Activated T-helper 1 cell treated with anti-CD3 and anti-CD28 coated beads, Interleukin-12 subunit alpha, Interleukin-12 subunit beta, Interleukin-2, Interleukin-4 antibody, amounts not matched to agents 30 ng/mL and 10 ng/mL and 1 ng/mL, durations not matched to agents 14 hours and 24 hours and 36 hours (primary cell): ENCODE measurements at regions of chr16 and their contacts with region 1.

Region 1: DNA sequence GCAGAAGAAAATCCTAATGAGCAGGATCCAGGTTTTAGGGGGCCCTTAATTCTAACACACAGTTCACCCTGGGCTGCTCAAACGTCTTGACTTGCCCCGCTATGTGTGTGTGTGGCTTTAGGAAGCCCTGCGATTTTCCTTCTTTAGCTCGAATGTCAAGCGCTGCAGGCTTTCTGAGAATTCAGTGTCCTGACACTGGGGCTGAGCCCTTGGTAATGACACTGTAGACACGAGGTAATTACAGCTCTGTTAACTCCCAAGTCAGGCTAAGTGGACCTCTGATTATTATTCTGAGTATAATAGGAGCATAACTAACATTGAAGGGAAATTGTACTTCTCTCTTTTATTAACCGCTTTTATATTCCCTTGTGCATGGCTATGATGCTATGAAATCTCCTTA is 202.1 kb downstream of the RBFOX1 start:
- DNase-seq: no peak
- H3K4me3 Mint-ChIP-seq: no peak overlapping the region
- H3K27ac Mint-ChIP-seq: no peak overlapping the region
- H3K4me1 Mint-ChIP-seq: no peaks in the 10 kb centered on the region
- H3K27me3 Mint-ChIP-seq: no peaks in the 10 kb centered on the region

Region 2: DNA sequence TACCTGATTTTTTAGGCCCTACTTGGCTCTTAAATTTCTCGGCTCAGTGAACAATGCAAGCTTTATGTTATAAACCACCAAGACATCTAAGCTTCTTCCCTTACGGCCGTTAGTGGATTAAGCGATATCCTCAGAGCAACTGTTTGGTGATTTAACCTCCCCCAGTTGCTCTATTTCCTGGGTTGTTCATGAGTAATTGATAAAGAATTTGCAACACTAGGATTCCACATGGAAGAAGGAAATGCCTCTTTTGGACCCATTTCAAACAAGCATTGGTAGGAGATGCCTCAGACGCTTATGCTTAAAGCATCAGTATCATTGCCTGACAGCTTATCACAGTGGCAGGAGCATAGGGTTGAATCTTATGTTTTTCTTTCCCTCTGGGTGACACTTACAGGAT is 136.8 kb before region 1 on chr16:
- intact Hi-C with region 1: loop called (anchors 10 kb)
- DNase-seq: no peak
- H3K4me3 Mint-ChIP-seq: no peak overlapping the region
- H3K27ac Mint-ChIP-seq: no peak overlapping the region
- H3K4me1 Mint-ChIP-seq: no peaks in the 10 kb centered on the region
- H3K27me3 Mint-ChIP-seq: no peaks in the 10 kb centered on the region